ENCODE measurements at regions of chr12 and their contacts with region 1.

Region 1: DNA sequence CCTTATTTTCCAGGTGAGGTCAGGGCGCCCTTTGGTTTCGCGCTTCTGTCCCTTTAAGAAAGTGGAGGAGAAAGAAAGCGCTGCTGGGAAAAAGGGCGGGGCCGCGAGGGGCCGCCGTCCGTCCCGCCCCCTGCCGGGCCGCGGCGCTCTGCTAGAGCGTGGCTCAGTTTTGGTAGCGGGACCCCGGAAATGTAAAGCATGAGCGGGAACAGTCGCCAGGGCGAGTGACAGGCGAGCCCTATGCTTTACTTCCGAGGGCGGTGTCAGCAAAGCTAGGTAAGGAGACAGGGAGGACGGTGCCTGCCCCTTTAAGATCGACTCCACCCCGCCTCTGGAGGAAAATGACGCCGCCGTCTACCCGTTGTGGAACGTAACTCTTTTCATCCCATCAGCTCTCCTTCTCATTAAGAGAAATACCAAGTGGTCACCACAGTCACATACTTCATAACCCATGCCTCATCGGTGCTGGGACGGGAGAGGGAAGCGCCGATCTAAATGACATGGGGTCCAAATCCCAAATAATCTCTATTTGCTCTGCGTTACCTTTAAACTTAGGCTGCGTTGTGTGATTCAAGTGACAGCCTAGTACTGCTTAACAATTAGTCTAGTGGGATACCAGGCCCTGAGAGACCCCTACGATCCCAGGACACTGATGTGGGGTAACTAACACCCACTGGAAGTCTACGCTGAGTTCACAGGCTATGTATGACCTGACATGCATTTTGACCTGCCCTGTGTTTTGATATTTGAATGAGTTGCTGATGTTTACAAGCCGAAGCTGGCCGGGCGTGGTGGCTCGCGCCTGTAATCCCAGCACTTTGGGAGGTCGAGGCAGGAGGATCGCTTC is at the start of gene ETFBKMT:
- DNase-seq: peak; percentile 96
- H3K4me3 ChIP-seq: peak within 1 kb of the TSS; percentile 68 to 81 (median 75)
- H3K27ac ChIP-seq: peak within 1 kb of the TSS; percentile 92
- H3K4me1 ChIP-seq: peaks cover 7% of the 10 kb centered on the region
- H3K27me3 ChIP-seq: no peaks in the 10 kb centered on the region
- CTCF ChIP-seq: peak in 1 of 2 donors; percentile 45
- total RNA-seq, gene ETFBKMT: 2.1 to 2.5 TPM

Region 2: GRCh38 chr12:31405021-31405420 is 254.3 kb before region 1 on chr12:
- CTCF ChIA-PET with region 1: no interaction called
- dilution Hi-C with region 1: no loop called
- in situ Hi-C with region 1: no loop called
- intact Hi-C with region 1: no loop called
- DNase-seq: no peak
- H3K4me3 ChIP-seq: no peak overlapping the region
- H3K27ac ChIP-seq: no peak overlapping the region
- H3K4me1 ChIP-seq: no peaks in the 10 kb centered on the region
- H3K27me3 ChIP-seq: no peaks in the 10 kb centered on the region
- CTCF ChIP-seq: no peak

Region 3: DNA sequence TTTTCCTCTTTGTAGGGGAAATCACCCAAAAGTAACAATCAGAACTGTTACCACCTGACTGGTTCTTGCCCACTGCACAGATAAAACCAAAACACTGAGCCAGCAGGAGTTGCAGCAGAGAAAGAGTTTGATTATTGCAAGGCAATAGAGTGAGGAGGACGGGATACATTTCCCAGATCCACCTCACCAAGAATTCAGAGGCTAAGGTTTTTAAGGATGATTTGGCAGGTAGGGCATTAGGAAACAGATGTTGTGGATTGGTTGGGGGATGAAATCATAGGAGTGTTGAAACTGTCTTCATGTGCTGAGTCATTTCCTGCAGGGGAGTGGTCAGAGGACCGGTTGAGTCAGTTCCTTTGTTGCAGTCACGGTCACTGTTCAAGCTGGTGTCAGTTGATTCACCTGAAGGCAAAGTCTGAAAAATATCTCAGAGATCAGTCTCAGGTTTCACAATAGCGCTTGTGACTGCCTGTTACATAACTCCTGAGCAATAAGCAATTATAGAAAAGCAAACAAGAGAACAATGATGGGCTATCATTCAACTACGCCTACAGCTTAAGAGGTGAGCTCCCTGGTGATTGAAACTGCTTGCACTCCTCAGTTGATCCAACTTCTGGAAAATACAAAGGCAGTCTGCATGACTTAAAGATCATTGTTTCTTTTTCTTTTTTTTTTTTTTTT is 89.9 kb after region 1 on chr12:
- CTCF ChIA-PET with region 1: no interaction called
- dilution Hi-C with region 1: no loop called
- in situ Hi-C with region 1: no loop called
- intact Hi-C with region 1: loop called (anchors 5 kb)
- DNase-seq: peak; percentile 100
- H3K4me3 ChIP-seq: no peak overlapping the region
- H3K27ac ChIP-seq: peak overlapping the region; percentile 91
- H3K4me1 ChIP-seq: peaks cover 15% of the 10 kb centered on the region
- H3K27me3 ChIP-seq: no peaks in the 10 kb centered on the region
- CTCF ChIP-seq: no peak

Region 4: GRCh38 chr12:32025906-32026305 is 366.6 kb after region 1 on chr12:
- CTCF ChIA-PET with region 1: no interaction called
- dilution Hi-C with region 1: no loop called
- in situ Hi-C with region 1: no loop called
- intact Hi-C with region 1: no loop called
- DNase-seq: no peak
- H3K4me3 ChIP-seq: no peak overlapping the region
- H3K27ac ChIP-seq: no peak overlapping the region
- H3K4me1 ChIP-seq: no peaks in the 10 kb centered on the region
- H3K27me3 ChIP-seq: no peaks in the 10 kb centered on the region
- CTCF ChIP-seq: no peak

Region 5: GRCh38 chr12:32062881-32063280 is 403.6 kb after region 1 on chr12:
- CTCF ChIA-PET with region 1: no interaction called
- dilution Hi-C with region 1: no loop called
- in situ Hi-C with region 1: no loop called
- intact Hi-C with region 1: loop called (anchors 1 kb)
- DNase-seq: no peak
- H3K4me3 ChIP-seq: no peak overlapping the region
- H3K27ac ChIP-seq: no peak overlapping the region
- H3K4me1 ChIP-seq: no peaks in the 10 kb centered on the region
- H3K27me3 ChIP-seq: no peaks in the 10 kb centered on the region
- CTCF ChIP-seq: no peak

Region 6: GRCh38 chr12:32444895-32445294 is 785.6 kb after region 1 on chr12:
- CTCF ChIA-PET with region 1: no interaction called
- dilution Hi-C with region 1: no loop called
- in situ Hi-C with region 1: no loop called
- intact Hi-C with region 1: loop called (anchors 10 kb)
- DNase-seq: peak; percentile 90
- H3K4me3 ChIP-seq: no peak overlapping the region
- H3K27ac ChIP-seq: peak overlapping the region; percentile 45
- H3K4me1 ChIP-seq: peaks cover 67% of the 10 kb centered on the region
- H3K27me3 ChIP-seq: no peaks in the 10 kb centered on the region
- CTCF ChIP-seq: no peak